WTC11 (cell line): ENCODE measurements at regions of chr16 and their contacts with region 1.

Region 1: GRCh38 chr16:66588981-66589713 is 9.9 kb downstream of the CMTM2 start:
- DNase-seq: peak; percentile 79
- ATAC-seq: peak; percentile 99
- H3K4me3 Mint-ChIP-seq: no peak overlapping the region
- H3K27ac Mint-ChIP-seq: no peak overlapping the region; the same call in 1 of the 2 replicates
- H3K4me1 Mint-ChIP-seq: peaks cover 17% of the 10 kb centered on the region
- H3K27me3 Mint-ChIP-seq: no peaks in the 10 kb centered on the region
- CTCF ChIP-seq: peak; percentile 42; the same call in 1 of the 2 replicates

Region 2: GRCh38 chr16:66474750-66475199 is 114.4 kb before region 1 on chr16:
- CTCF ChIA-PET with region 1: interaction called, 20 read pairs
- POLR2A ChIA-PET with region 1: no interaction called
- DNase-seq: no peak
- ATAC-seq: no peak
- H3K4me3 Mint-ChIP-seq: no peak overlapping the region
- H3K27ac Mint-ChIP-seq: no peak overlapping the region
- H3K4me1 Mint-ChIP-seq: peaks cover 30% of the 10 kb centered on the region
- H3K27me3 Mint-ChIP-seq: peaks cover 8% of the 10 kb centered on the region; the same call in 1 of the 2 replicates
- CTCF ChIP-seq: no peak

Region 3: GRCh38 chr16:66483689-66484481 is 105.3 kb before region 1 on chr16:
- CTCF ChIA-PET with region 1: interaction called, 20 read pairs
- POLR2A ChIA-PET with region 1: no interaction called
- DNase-seq: peak; percentile 91
- ATAC-seq: peak; percentile 91
- H3K4me3 Mint-ChIP-seq: no peak overlapping the region
- H3K27ac Mint-ChIP-seq: no peak overlapping the region
- H3K4me1 Mint-ChIP-seq: peaks cover 9% of the 10 kb centered on the region
- H3K27me3 Mint-ChIP-seq: peaks cover 2% of the 10 kb centered on the region
- CTCF ChIP-seq: peak; percentile 80

Region 4: DNA sequence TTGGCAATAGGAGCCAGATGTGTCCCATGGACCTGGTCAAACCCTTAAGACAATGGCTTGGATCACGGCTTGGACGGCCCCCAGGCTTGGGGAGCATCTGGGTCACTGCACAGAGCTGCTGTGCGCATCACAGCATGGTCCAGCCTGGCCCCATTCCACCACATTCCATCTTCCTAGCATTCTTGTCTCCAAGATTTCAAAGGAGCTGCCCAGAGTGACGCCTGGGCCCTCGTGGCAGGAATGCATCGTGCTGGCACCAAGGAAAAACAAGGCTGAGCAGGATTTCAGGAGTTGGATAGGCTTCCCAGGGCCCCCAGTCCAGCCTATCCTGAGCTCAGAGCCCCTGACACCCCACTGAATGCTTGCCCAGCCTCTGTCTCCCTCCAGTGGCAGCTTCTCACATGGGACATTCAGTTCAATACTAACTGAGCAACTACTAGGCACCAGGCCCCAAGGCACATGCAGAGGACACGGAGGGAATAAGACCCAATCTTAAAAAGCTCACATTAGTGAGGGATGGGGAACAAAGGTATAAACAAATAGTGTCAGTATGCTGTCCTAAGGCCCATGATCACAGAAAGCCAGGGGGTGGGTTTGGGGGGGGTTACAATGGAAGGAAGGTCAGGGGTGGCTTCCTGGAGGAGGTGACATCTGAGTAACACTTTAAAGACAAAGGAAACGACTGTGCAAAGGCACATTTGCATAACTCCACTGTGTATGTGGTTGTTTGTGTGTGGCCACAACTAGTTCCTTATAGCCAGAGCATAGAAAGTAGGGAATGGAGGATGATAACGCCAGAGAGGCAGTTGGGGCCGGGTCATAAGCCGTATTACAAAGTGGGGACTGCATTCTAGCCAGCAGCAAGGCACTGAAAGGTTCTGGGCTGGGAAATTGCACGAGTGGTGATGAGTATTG is 73.3 kb before region 1 on chr16:
- CTCF ChIA-PET with region 1: interaction called, 21 read pairs
- POLR2A ChIA-PET with region 1: no interaction called
- DNase-seq: peak; percentile 31
- ATAC-seq: peak; percentile 46
- H3K4me3 Mint-ChIP-seq: no peak overlapping the region
- H3K27ac Mint-ChIP-seq: peak overlapping the region; percentile 76
- H3K4me1 Mint-ChIP-seq: peaks cover 44% of the 10 kb centered on the region
- H3K27me3 Mint-ChIP-seq: no peaks in the 10 kb centered on the region
- CTCF ChIP-seq: 0 out of 2 replicates have a peak, but pooled peaks have one; percentile 17

Region 5: GRCh38 chr16:66552286-66553177 is 36.6 kb before region 1 on chr16 and contains the start of gene CKLF:
- CTCF ChIA-PET with region 1: interaction called, 10 read pairs
- POLR2A ChIA-PET with region 1: no interaction called
- DNase-seq: peak; percentile 85
- ATAC-seq: peak; percentile 47
- H3K4me3 Mint-ChIP-seq: peak within 1 kb of the TSS; percentile 68
- H3K27ac Mint-ChIP-seq: no peak within 1 kb of the TSS
- H3K4me1 Mint-ChIP-seq: peaks cover 35% of the 10 kb centered on the region
- H3K27me3 Mint-ChIP-seq: peaks cover 36% of the 10 kb centered on the region
- CTCF ChIP-seq: no peak
- total RNA-seq, gene CKLF: 21.0 to 23.9 TPM (median 23.8 TPM) in 3 replicates

Region 6: DNA sequence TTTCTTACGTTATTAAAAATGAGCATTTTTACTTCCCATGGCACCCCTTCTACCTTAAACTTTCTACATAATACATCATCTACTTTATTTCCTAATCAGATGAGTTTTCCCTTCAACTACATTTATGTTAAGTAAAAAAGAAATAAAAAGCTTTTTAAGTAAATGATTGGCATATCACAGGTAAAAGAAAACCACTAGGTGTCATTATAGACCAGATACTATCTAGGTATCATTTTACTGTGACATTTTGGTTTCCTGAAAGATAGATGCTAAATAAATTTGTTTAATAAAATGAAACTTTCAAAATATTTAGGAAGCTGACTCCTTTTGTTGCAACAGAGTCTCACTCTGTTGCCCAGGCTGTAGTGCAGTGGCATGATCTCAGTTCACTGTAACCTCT is 26.7 kb before region 1 on chr16:
- CTCF ChIA-PET with region 1: interaction called, 11 read pairs
- POLR2A ChIA-PET with region 1: no interaction called
- DNase-seq: no peak
- ATAC-seq: no peak
- H3K4me3 Mint-ChIP-seq: no peak overlapping the region
- H3K27ac Mint-ChIP-seq: no peak overlapping the region
- H3K4me1 Mint-ChIP-seq: no peaks in the 10 kb centered on the region
- H3K27me3 Mint-ChIP-seq: no peaks in the 10 kb centered on the region; the same call in 1 of the 2 replicates
- CTCF ChIP-seq: no peak

Region 7: DNA sequence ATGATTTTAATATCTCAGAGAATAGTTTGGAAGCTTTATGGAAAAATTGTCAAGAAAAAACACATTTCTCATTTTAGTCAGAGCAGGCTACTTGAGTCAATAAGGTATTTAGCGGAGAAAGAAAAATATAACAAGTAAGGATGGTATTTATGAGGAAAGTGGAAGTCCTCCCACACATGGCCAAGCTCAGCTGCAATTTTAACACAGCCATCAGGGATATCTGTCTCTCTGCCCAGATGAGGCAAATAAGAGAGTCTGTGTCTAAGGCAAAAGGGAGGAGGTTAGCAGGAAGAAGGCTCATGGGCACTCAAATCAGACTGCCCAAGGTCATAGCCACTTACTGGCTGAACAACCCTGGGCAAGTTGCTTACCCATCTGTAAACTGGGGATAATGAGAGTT is 15.1 kb before region 1 on chr16:
- CTCF ChIA-PET with region 1: interaction called, 23 read pairs
- POLR2A ChIA-PET with region 1: interaction called, 3 read pairs
- DNase-seq: no peak
- ATAC-seq: no peak
- H3K4me3 Mint-ChIP-seq: no peak overlapping the region
- H3K27ac Mint-ChIP-seq: no peak overlapping the region
- H3K4me1 Mint-ChIP-seq: peaks cover 7% of the 10 kb centered on the region
- H3K27me3 Mint-ChIP-seq: peaks cover 27% of the 10 kb centered on the region
- CTCF ChIP-seq: no peak

Region 8: DNA sequence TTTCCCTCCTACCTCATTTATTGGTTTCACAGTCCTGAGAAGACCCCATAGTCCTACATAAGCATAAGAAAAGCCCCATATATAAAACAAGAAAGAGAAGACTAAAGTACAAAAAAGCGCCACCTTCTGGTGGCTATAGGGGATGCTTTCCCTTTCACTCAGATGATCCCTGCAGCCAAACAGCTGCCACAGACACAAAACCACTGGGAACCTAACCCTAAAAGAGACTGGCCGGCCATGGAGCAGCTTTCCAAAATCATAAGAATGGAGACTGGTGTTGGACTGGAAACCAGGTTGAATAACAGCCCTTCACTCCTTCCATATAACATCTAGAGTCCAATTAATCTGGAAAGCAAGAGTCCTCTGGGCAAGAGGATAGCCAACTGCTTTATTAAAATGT is 150.9 kb after region 1 on chr16:
- CTCF ChIA-PET with region 1: no interaction called
- POLR2A ChIA-PET with region 1: no interaction called
- DNase-seq: peak; percentile 40
- ATAC-seq: peak; percentile 85
- H3K4me3 Mint-ChIP-seq: no peak overlapping the region
- H3K27ac Mint-ChIP-seq: peak overlapping the region; percentile 90
- H3K4me1 Mint-ChIP-seq: peaks cover 18% of the 10 kb centered on the region
- H3K27me3 Mint-ChIP-seq: no peaks in the 10 kb centered on the region
- CTCF ChIP-seq: peak; percentile 61